ENCODE measurements at regions of chr3 and their contacts with region 1.

Region 1: DNA sequence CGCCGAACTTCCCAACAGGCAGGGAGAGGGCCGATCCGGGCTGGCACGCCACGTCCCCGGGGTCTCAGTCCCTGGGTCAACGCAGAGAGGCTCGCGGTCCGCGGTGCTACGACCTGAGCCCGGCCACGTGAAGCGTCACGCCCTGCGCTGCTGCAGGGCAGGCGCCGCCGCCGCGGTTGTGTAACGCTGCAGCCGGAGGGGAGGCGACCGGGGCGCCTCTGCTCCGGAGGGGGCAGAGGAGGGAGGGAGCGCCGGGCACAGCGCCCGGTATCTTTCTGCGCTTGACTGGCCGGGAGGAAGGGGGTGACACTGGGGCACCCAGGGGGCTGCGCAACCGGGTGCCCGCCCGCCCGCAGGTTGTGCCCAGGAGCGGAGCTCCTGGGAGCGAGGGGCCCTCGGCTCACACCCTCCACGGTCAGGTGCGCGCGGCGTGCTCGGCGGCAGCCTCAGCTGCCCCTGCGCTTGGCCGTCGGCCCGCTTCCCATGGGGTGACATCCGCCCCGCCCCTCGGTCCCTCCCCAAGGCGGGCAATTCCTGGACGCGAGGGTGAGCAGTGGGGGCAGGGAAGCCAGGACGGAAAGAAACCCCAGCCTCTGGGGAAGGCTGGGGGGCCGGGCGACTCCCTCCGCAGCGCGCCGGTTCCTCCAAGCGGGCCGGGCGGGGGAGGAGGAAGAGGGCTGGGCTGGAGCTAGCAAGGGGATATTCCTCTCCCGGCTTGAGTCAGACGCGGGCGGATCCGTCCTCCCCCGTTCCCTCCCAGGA is 852 bp upstream of the BHLHE40 start:
- DNase-seq: peak; percentile 94
- ATAC-seq: peak; percentile 68
- H3K4me3 ChIP-seq: peak overlapping the region; percentile 46 to 87
- H3K27ac ChIP-seq: peak overlapping the region; percentile 91
- H3K4me1 ChIP-seq: peaks cover 44 to 64% of the 10 kb centered on the region in 2 experiments
- H3K27me3 ChIP-seq: no peaks in the 10 kb centered on the region
- CTCF ChIP-seq: no peak
- POLR2A ChIP-seq: peak; percentile 60
- RAD21 ChIP-seq: no peak

Region 2: DNA sequence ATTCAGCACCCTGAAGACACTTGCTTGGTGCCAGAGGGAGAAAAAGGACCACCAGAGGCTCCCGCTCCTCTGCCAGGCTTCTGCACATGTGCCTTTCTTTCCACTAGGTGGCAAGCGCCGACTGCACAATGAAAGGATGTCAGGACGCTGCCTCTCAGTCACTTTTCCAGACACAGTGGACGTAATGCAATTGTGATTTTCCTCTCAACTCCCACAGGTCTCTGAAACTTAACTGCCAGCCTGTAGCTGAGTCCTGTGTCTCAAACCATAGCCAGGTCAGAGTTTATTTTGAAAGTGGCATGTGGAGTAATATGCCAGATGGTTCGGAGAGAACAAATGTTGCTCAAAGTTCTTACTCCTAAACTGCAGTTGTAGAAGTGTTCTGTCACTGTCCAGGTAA is 322.3 kb before region 1 on chr3:
- CTCF ChIA-PET with region 1: interaction called, 3 read pairs
- POLR2A ChIA-PET with region 1: no interaction called
- RAD21 ChIA-PET with region 1: no interaction called
- intact Hi-C with region 1: loop called (anchors 5 kb)
- DNase-seq: peak; percentile 56
- ATAC-seq: peak; percentile 99
- H3K4me3 ChIP-seq: no peak overlapping the region
- H3K27ac ChIP-seq: no peak overlapping the region
- H3K4me1 ChIP-seq: no peaks in the 10 kb centered on the region
- H3K27me3 ChIP-seq: no peaks in the 10 kb centered on the region
- CTCF ChIP-seq: peak; percentile 85 to 95 (median 91)
- POLR2A ChIP-seq: no peak
- RAD21 ChIP-seq: peak; percentile 95

Region 3: GRCh38 chr3:4722103-4722502 is 256.3 kb before region 1 on chr3:
- CTCF ChIA-PET with region 1: interaction called, 28 read pairs
- POLR2A ChIA-PET with region 1: interaction called, 4 read pairs
- RAD21 ChIA-PET with region 1: interaction called, 6 to 9 read pairs
- intact Hi-C with region 1: loop called (anchors 1 kb)
- DNase-seq: peak; percentile 68
- ATAC-seq: peak; percentile 87
- H3K4me3 ChIP-seq: no peak overlapping the region
- H3K27ac ChIP-seq: no peak overlapping the region
- H3K4me1 ChIP-seq: peaks cover 16 to 30% of the 10 kb centered on the region in 2 experiments; a peak in 3 of 4 replicates
- H3K27me3 ChIP-seq: no peaks in the 10 kb centered on the region
- CTCF ChIP-seq: peak; percentile 47 to 91 (median 60)
- POLR2A ChIP-seq: no peak
- RAD21 ChIP-seq: peak; percentile 97

Region 4: GRCh38 chr3:4943553-4943952 is 34.8 kb before region 1 on chr3:
- CTCF ChIA-PET with region 1: interaction called, 10 read pairs
- POLR2A ChIA-PET with region 1: no interaction called
- RAD21 ChIA-PET with region 1: no interaction called
- intact Hi-C with region 1: no loop called
- DNase-seq: peak; percentile 19
- ATAC-seq: peak; percentile 92
- H3K4me3 ChIP-seq: no peak overlapping the region
- H3K27ac ChIP-seq: no peak overlapping the region
- H3K4me1 ChIP-seq: no peaks in the 10 kb centered on the region
- H3K27me3 ChIP-seq: no peaks in the 10 kb centered on the region
- CTCF ChIP-seq: peak in 2 of 3 experiments; percentile 68 to 73; a peak in 4 of 6 replicates
- POLR2A ChIP-seq: no peak
- RAD21 ChIP-seq: 0 out of 2 replicates have a peak, but pooled peaks have one; percentile 20

Region 5: DNA sequence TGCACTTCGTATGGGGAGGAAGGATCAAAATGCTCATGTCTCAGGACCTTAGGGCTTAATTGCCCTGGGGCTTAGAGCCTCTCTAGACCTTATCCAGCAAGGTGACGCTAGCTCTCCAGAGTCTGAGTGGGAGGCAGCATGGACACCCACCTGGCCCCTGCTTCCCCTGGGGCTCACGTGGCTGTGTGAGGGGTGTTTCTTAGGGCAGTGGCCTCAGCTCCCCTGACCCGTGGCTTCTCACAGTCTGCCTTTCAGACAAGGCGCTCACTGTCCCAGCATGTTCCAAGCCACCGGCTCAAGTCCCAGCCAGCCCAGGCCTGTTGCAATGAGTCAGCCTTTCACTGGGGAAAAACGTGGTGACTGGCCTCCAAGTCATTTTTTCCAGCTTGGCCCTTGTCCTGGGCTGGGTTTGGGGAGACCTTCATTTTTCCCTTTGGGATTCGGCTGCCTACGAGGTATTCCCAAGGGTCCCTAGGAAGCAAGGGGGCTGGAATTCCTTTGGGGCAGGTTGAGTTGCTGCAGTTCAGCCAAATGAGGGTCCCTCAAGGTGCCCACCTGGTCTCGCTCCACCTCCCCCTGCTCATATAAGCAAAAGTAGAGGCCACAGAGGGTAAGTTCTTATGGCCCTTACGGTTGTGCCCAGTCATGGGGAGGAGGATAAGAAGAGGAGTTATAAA is 16.6 kb after region 1 on chr3:
- CTCF ChIA-PET with region 1: interaction called, 10 read pairs
- POLR2A ChIA-PET with region 1: interaction called, 27 read pairs
- RAD21 ChIA-PET with region 1: interaction called in 1 of 2 experiments, 6 read pairs
- intact Hi-C with region 1: no loop called
- DNase-seq: peak; percentile 94
- ATAC-seq: peak; percentile 81
- H3K4me3 ChIP-seq: peak overlapping the region in 1 of 2 experiments; percentile 27; a peak in 1 of 4 replicates
- H3K27ac ChIP-seq: peak overlapping the region; percentile 85
- H3K4me1 ChIP-seq: peaks cover 36 to 69% of the 10 kb centered on the region in 2 experiments
- H3K27me3 ChIP-seq: no peaks in the 10 kb centered on the region
- CTCF ChIP-seq: no peak
- POLR2A ChIP-seq: no peak
- RAD21 ChIP-seq: no peak

Region 6: GRCh38 chr3:5026331-5027218 is 48.2 kb after region 1 on chr3:
- CTCF ChIA-PET with region 1: interaction called, 8 read pairs
- POLR2A ChIA-PET with region 1: interaction called, 39 read pairs
- RAD21 ChIA-PET with region 1: interaction called, 4 to 8 read pairs
- intact Hi-C with region 1: loop called (anchors 1 kb)
- DNase-seq: peak; percentile 92
- ATAC-seq: peak; percentile 81
- H3K4me3 ChIP-seq: peak overlapping the region; percentile 44 to 54
- H3K27ac ChIP-seq: peak overlapping the region; percentile 31; the same call in 1 of the 2 replicates
- H3K4me1 ChIP-seq: peaks cover 39 to 58% of the 10 kb centered on the region in 2 experiments
- H3K27me3 ChIP-seq: no peaks in the 10 kb centered on the region
- CTCF ChIP-seq: peak in 2 of 3 experiments; percentile 63 to 67; a peak in 4 of 6 replicates
- POLR2A ChIP-seq: no peak
- RAD21 ChIP-seq: no peak

Region 7: DNA sequence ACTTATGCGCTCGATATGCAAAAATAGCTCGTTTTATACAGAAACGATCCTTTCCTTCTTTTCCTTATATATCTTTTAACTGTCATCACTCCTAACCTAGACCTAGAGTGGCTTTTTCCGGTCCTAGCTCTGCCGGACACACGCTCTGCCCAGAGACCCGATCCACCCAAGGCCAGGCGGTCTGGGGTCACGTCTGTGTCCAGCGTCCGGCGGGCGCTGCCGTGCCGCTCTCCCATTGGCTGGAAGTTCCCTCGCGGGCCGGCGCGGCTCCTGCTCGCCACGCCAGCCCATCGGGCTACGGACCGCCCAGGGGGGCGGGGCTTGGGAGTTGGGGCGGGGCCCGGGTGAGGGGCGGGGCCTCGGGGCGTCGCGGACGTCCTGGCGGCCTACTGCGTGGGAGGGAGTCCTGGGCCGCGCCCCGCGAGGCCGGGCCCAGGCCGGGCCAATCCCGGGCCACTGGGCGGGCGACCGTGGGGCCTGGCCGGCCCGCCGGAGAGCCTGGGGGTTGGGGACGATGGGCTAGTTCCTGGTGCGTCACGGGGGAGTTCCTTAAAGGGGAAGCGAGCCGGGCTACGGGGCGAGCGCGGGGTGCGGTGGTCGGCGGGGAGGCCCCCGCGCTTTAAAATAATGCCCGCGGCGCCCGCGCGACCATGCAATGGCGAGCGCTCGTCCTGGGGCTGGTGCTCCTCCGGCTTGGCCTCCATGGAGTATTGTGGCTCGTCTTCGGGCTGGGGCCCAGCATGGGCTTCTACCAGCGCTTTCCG is 209.0 kb after region 1 on chr3 and contains the start of gene EDEM1:
- CTCF ChIA-PET with region 1: no interaction called
- POLR2A ChIA-PET with region 1: no interaction called
- RAD21 ChIA-PET with region 1: no interaction called
- intact Hi-C with region 1: loop called (anchors 5 kb)
- DNase-seq: peak; percentile 86
- ATAC-seq: peak; percentile 96
- H3K4me3 ChIP-seq: peak within 1 kb of the TSS; percentile 65 to 88
- H3K27ac ChIP-seq: peak within 1 kb of the TSS; percentile 90
- H3K4me1 ChIP-seq: peaks cover 4 to 20% of the 10 kb centered on the region in 2 experiments
- H3K27me3 ChIP-seq: no peaks in the 10 kb centered on the region
- CTCF ChIP-seq: no peak
- POLR2A ChIP-seq: peak; percentile 36
- RAD21 ChIP-seq: no peak
- total RNA-seq, gene EDEM1: 23.7 TPM

Measured in HCT116 (cell line).